Activated CD4-positive, alpha-beta memory T cell treated with anti-CD3 and anti-CD28 coated beads for 36 hours (primary cell): ENCODE measurements at regions of chr2 and their contacts with region 1.

Region 1: GRCh38 chr2:58350484-58350883 is 109.4 kb upstream of the FANCL start:
- DNase-seq: no peak
- H3K4me3 Mint-ChIP-seq: no peak overlapping the region
- H3K27ac Mint-ChIP-seq: no peak overlapping the region
- H3K4me1 Mint-ChIP-seq: peaks cover 6% of the 10 kb centered on the region
- H3K27me3 Mint-ChIP-seq: peaks cover 33% of the 10 kb centered on the region

Region 2: GRCh38 chr2:57906152-57906732 is 444.2 kb before region 1 on chr2:
- CTCF ChIA-PET with region 1: no interaction called
- POLR2A ChIA-PET with region 1: no interaction called
- intact Hi-C with region 1: loop called (anchors 10 kb)
- DNase-seq: no peak
- H3K4me3 Mint-ChIP-seq: no peak overlapping the region
- H3K27ac Mint-ChIP-seq: no peak overlapping the region
- H3K4me1 Mint-ChIP-seq: peaks cover 22% of the 10 kb centered on the region
- H3K27me3 Mint-ChIP-seq: no peaks in the 10 kb centered on the region

Region 3: DNA sequence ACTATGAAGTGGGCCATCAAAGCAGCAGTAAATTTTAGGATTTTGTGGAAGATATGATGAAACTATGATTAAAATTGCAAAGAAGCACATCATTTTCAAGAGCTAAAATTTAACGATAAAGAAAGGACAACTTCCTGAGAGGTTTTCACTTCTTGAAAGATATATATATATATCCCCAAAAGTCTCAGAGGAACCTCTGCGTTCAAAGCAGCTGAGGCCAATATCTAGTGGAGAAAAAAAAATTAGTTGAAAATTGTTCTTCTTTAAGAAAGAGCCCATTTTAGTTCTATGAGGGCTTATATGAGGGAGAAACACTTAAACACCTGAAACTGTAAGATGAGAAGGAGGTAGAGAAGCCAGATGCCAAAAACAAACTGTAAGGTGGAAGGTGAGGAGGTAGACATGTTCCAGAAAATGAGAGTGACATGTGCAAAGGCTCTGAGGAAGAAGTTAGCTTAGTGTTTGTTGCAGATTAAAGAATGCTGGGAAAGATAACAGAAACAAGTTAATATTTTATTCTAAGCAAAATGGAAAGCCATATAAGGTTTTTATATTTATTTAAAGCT is 376.8 kb before region 1 on chr2:
- CTCF ChIA-PET with region 1: no interaction called
- POLR2A ChIA-PET with region 1: no interaction called
- intact Hi-C with region 1: no loop called
- DNase-seq: no peak
- H3K4me3 Mint-ChIP-seq: no peak overlapping the region
- H3K27ac Mint-ChIP-seq: no peak overlapping the region
- H3K4me1 Mint-ChIP-seq: no peaks in the 10 kb centered on the region
- H3K27me3 Mint-ChIP-seq: no peaks in the 10 kb centered on the region

Region 4: GRCh38 chr2:58261215-58261614 is 89.3 kb before region 1 on chr2:
- CTCF ChIA-PET with region 1: no interaction called
- POLR2A ChIA-PET with region 1: no interaction called
- intact Hi-C with region 1: loop called (anchors 1 kb)
- DNase-seq: no peak
- H3K4me3 Mint-ChIP-seq: no peak overlapping the region
- H3K27ac Mint-ChIP-seq: no peak overlapping the region
- H3K4me1 Mint-ChIP-seq: peaks cover 3% of the 10 kb centered on the region
- H3K27me3 Mint-ChIP-seq: peaks cover 14% of the 10 kb centered on the region

Region 5: GRCh38 chr2:58376592-58376991 is 26.1 kb after region 1 on chr2:
- CTCF ChIA-PET with region 1: no interaction called
- POLR2A ChIA-PET with region 1: no interaction called
- intact Hi-C with region 1: loop called (anchors 1 kb)
- DNase-seq: no peak
- H3K4me3 Mint-ChIP-seq: no peak overlapping the region
- H3K27ac Mint-ChIP-seq: no peak overlapping the region
- H3K4me1 Mint-ChIP-seq: peaks cover 11% of the 10 kb centered on the region
- H3K27me3 Mint-ChIP-seq: peaks cover 5% of the 10 kb centered on the region